OCI-LY7 (cell line): ENCODE measurements at regions of chr17 and their contacts with region 1.

Region 1: DNA sequence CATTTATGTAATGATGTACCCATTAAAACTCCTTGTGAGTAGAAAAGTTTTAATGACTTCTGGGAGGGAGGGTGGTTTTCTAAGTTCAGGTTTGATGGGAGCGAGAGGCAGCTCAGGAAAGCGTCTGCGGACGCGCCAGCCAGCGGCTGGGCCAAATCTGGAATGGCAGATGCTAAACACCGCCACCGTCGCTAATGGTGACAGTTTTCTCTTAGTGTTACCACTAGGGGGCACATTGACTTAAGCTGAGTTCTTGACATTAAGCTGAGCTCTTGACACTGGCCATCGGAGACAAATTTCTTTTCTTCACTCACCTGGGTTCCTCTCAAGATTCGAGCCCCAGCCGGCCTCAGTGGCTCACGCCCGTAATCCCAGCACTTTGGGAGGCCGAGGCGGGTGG is 6.7 kb downstream of the TRPV1 start:
- DNase-seq: peak; percentile 84
- H3K4me3 ChIP-seq: no peak overlapping the region
- H3K27ac ChIP-seq: no peak overlapping the region
- H3K4me1 ChIP-seq: no peaks in the 10 kb centered on the region
- CTCF ChIP-seq: peak; percentile 82

Region 2: DNA sequence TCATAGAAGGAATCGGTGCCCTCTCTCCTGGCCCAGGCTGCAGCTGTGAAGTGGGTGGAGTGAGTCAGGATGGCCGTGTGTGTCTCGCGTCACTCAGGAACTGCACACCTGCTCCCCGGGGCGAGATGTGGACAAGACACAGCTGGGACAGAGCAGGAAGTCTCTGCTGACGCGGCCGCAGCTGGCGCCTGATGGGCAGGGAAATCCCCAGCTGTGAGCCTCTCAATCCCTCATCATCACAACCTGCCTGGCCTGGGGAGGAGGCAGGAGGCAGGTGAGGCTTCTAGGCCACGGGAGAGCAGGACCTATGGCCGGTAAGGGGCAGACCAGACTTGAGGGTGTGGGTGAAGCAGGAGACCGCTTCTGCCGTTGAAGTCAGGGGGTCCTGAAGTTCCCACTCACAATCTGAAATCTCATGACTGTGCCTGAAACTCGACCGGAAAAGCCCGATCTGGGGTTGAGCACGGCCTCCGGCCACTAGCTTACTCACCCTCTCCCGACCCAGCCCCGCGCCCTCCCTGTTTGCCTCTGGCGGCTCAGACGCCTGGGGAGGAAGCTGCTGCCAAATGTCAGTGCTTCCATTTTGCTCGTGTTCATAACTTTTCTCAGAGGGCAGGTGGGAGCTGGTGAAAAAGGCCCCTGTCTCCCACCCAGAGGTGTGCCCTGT is 43.8 kb before region 1 on chr17:
- CTCF ChIA-PET with region 1: no interaction called
- POLR2A ChIA-PET with region 1: no interaction called
- intact Hi-C with region 1: no loop called
- DNase-seq: peak; percentile 91
- H3K4me3 ChIP-seq: peak overlapping the region; percentile 38
- H3K27ac ChIP-seq: peak overlapping the region; percentile 47
- H3K4me1 ChIP-seq: peaks cover 42% of the 10 kb centered on the region
- CTCF ChIP-seq: no peak

Region 3: DNA sequence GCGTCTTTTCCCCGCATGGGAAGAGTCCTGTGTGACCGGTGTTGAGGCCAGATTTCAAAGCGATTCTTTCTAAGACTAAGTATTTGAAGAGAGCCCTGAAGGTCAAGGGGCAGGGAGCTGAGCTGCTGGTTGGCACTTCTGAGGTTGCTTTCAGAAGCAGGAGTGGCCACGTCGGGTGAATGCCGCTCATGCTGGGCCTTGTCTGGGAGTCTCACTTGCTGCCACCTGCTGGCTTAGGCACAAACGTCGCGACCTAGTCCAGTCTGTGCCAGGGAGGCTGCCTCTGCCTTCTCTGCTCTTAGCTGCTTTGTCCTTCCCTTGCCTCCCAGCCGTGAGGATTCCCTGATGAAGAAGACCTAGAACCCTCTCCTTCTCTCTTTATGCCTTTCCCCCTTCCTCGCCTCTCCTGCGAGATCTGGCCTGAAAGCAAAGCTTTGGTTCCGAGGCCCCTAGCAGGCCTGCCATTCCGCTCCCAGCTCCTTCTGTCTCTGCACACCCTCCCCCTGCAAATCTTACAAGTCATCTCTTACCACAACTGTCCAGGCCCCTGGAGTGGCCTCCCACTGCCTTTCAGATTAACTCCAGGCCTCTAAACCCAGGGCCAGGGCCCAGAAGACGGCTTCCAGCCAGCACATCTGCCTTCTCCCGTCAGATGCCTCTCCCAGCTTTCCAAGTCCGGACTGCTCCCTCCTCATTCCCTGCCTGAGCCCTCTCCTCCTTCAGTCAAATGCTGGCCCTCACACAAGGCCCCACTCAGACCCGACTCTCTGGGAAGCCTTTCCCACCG is 45.5 kb after region 1 on chr17:
- CTCF ChIA-PET with region 1: no interaction called
- POLR2A ChIA-PET with region 1: no interaction called
- intact Hi-C with region 1: loop called (anchors 2 kb)
- DNase-seq: peak; percentile 78
- H3K4me3 ChIP-seq: no peak overlapping the region
- H3K27ac ChIP-seq: no peak overlapping the region
- H3K4me1 ChIP-seq: peaks cover 32% of the 10 kb centered on the region
- CTCF ChIP-seq: peak; percentile 76

Region 4: GRCh38 chr17:3668279-3669085 is 66.0 kb after region 1 on chr17 and contains the starts of genes EMC6 and TAX1BP3:
- CTCF ChIA-PET with region 1: no interaction called
- POLR2A ChIA-PET with region 1: no interaction called
- intact Hi-C with region 1: loop called (anchors 2 kb)
- DNase-seq: peak; percentile 98
- H3K4me3 ChIP-seq: peak within 1 kb of the TSS; percentile 93
- H3K27ac ChIP-seq: peak within 1 kb of the TSS; percentile 55
- H3K4me1 ChIP-seq: peaks cover 21% of the 10 kb centered on the region
- CTCF ChIP-seq: no peak
- total RNA-seq, gene EMC6: 32.5 and 36.0 TPM in 2 replicates
- total RNA-seq, gene TAX1BP3: 12.4 and 19.8 TPM in 2 replicates